HCT116 (cell line): ENCODE measurements at regions of chr11 and their contacts with region 1.

Region 1: DNA sequence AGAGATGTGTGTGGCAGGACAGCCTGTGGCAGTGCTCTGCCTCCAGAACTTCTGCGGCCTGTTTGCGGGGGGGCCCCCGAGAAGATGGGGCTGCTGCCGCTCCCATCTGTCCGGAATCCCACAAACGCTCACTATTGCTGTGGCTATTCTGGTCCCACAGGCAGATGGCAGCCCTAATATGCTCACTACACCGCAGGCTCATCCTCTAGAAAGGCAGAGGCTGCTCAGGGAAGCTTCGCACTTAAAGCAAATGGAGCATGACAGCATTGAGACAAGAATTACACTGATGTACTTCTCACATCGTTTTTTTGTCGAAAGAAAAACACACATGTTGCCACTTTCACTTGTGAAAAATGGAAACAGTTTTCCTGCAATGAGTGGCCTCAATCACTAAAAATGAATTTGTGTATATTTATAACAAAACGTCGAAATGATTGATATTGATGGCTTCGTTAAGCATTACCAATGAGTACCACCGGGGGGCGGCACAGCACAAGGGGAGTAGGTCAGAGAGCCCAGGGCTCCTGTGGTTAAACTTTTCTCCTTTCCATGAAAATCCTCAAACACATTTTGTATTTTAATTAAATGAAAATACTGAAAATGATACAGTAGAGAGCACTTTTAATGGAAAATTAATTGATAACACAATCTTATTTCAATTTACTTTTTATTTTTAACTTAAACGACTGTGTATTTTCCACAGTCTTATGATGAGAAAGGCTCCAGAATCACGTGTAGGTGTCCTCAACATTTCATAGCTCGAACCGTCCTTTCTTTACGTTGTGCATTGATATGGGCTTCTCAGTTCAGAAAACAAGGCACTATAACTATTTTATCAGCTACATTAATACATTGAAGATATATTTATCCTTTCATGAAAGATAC is 69.1 kb downstream of the CTTN start:
- DNase-seq: peak; percentile 33
- ATAC-seq: peak; percentile 50
- H3K4me3 ChIP-seq: no peak overlapping the region
- H3K27ac ChIP-seq: no peak overlapping the region
- H3K4me1 ChIP-seq: no peaks in the 10 kb centered on the region
- H3K27me3 ChIP-seq: no peaks in the 10 kb centered on the region
- CTCF ChIP-seq: peak; percentile 88 to 95 (median 93)
- POLR2A ChIP-seq: no peak
- RAD21 ChIP-seq: peak; percentile 97

Region 2: GRCh38 chr11:70483077-70483861 is 15.8 kb after region 1 on chr11:
- CTCF ChIA-PET with region 1: interaction called, 21 read pairs
- POLR2A ChIA-PET with region 1: interaction called, 3 read pairs
- RAD21 ChIA-PET with region 1: no interaction called
- intact Hi-C with region 1: no loop called
- DNase-seq: peak; percentile 60
- ATAC-seq: peak; percentile 72
- H3K4me3 ChIP-seq: peak overlapping the region; percentile 15 to 48
- H3K27ac ChIP-seq: peak overlapping the region; percentile 68
- H3K4me1 ChIP-seq: peaks cover 26 to 39% of the 10 kb centered on the region in 2 experiments
- H3K27me3 ChIP-seq: no peaks in the 10 kb centered on the region
- CTCF ChIP-seq: peak; percentile 45 to 69 (median 68); a peak in 5 of 6 replicates
- POLR2A ChIP-seq: no peak
- RAD21 ChIP-seq: peak; percentile 56

Region 3: GRCh38 chr11:70755410-70756161 is 288.1 kb after region 1 on chr11:
- CTCF ChIA-PET with region 1: interaction called, 12 read pairs
- POLR2A ChIA-PET with region 1: no interaction called
- RAD21 ChIA-PET with region 1: no interaction called
- intact Hi-C with region 1: loop called (anchors 1 kb)
- DNase-seq: peak; percentile 31
- ATAC-seq: peak; percentile 100
- H3K4me3 ChIP-seq: no peak overlapping the region
- H3K27ac ChIP-seq: no peak overlapping the region
- H3K4me1 ChIP-seq: peaks cover 0 to 4% of the 10 kb centered on the region in 2 experiments; a peak in 1 of 4 replicates
- H3K27me3 ChIP-seq: no peaks in the 10 kb centered on the region
- CTCF ChIP-seq: peak; percentile 86 to 97 (median 92)
- POLR2A ChIP-seq: no peak
- RAD21 ChIP-seq: peak; percentile 93

Region 4: GRCh38 chr11:70788248-70789022 is 321.0 kb after region 1 on chr11:
- CTCF ChIA-PET with region 1: no interaction called
- POLR2A ChIA-PET with region 1: no interaction called
- RAD21 ChIA-PET with region 1: interaction called in 1 of 2 experiments, 10 read pairs
- intact Hi-C with region 1: no loop called
- DNase-seq: peak; percentile 68
- ATAC-seq: peak; percentile 95
- H3K4me3 ChIP-seq: peak overlapping the region in 1 of 2 experiments; percentile 32; a peak in 2 of 4 replicates
- H3K27ac ChIP-seq: peak overlapping the region; percentile 65
- H3K4me1 ChIP-seq: peaks cover 15 to 30% of the 10 kb centered on the region in 2 experiments
- H3K27me3 ChIP-seq: no peaks in the 10 kb centered on the region
- CTCF ChIP-seq: no peak
- POLR2A ChIP-seq: no peak
- RAD21 ChIP-seq: no peak

Region 5: GRCh38 chr11:70815485-70815861 is 348.0 kb after region 1 on chr11:
- CTCF ChIA-PET with region 1: no interaction called
- POLR2A ChIA-PET with region 1: no interaction called
- RAD21 ChIA-PET with region 1: interaction called in 1 of 2 experiments, 3 read pairs
- intact Hi-C with region 1: loop called (anchors 2 kb)
- DNase-seq: no peak
- ATAC-seq: no peak
- H3K4me3 ChIP-seq: no peak overlapping the region
- H3K27ac ChIP-seq: no peak overlapping the region
- H3K4me1 ChIP-seq: no peaks in the 10 kb centered on the region
- H3K27me3 ChIP-seq: no peaks in the 10 kb centered on the region
- CTCF ChIP-seq: no peak
- POLR2A ChIP-seq: no peak
- RAD21 ChIP-seq: no peak

Region 6: DNA sequence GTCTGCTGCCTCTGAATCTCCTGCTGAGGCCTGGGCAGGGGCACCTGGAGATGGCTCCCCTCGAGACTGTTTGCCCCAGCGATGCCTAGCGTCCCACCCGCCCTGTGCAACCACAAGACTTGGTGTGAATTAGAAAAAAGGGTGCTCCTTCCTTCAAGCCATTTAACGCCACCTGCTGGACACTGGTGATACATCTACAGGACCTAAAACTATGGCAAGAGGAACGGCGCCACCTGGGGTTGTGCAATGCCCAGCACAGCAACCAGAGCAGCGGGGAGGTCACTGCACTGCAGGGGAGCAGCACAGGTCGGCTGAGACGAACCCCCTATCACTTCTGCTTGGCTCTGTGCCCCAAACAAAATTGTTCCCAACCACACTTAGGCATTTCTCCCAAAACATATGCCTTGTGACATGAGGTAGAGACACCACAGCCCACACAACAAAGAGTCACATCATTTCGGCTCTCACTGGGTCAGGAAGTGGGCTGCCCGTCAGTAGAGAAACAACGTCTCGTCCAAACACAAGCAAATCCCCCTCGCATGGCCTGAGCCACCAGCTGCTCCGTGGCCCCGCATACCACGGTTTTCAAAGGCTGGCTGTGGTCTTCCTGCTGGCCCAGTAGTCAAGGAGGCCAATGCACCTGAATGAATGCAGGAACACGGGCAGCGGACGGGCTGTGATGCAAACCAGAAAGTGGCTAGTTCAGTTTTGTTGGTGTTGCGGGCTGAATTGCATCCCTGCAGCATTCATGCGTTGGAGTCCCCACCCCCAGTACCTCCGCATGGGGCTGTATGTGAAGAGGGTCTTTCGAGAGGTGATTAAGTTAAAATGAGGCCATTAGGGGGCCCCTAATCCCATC is 613.0 kb after region 1 on chr11:
- CTCF ChIA-PET with region 1: interaction called, 3 read pairs
- POLR2A ChIA-PET with region 1: no interaction called
- RAD21 ChIA-PET with region 1: no interaction called
- intact Hi-C with region 1: loop called (anchors 1 kb)
- DNase-seq: peak; percentile 79
- ATAC-seq: peak; percentile 97
- H3K4me3 ChIP-seq: no peak overlapping the region
- H3K27ac ChIP-seq: no peak overlapping the region
- H3K4me1 ChIP-seq: peaks cover 0 to 7% of the 10 kb centered on the region in 2 experiments; a peak in 1 of 4 replicates
- H3K27me3 ChIP-seq: no peaks in the 10 kb centered on the region
- CTCF ChIP-seq: peak; percentile 87 to 100 (median 92)
- POLR2A ChIP-seq: no peak
- RAD21 ChIP-seq: peak; percentile 89